PC-3 (cell line): ENCODE measurements at regions of chr2 and their contacts with region 1.

Region 1: GRCh38 chr2:116952254-116952653 is 862.2 kb upstream of the DDX18 start:
- DNase-seq: peak; percentile 52
- ATAC-seq: no peak
- H3K4me3 ChIP-seq: no peak overlapping the region
- H3K27ac ChIP-seq: no peak overlapping the region
- H3K4me1 ChIP-seq: no peaks in the 10 kb centered on the region
- H3K27me3 ChIP-seq: no peaks in the 10 kb centered on the region
- CTCF ChIP-seq: peak; percentile 81

Region 2: GRCh38 chr2:116378786-116379185 is 573.5 kb before region 1 on chr2:
- CTCF ChIA-PET with region 1: no interaction called
- POLR2A ChIA-PET with region 1: no interaction called
- intact Hi-C with region 1: no loop called
- DNase-seq: no peak
- ATAC-seq: no peak
- H3K4me3 ChIP-seq: no peak overlapping the region
- H3K27ac ChIP-seq: no peak overlapping the region
- H3K4me1 ChIP-seq: no peaks in the 10 kb centered on the region
- H3K27me3 ChIP-seq: 0 out of 2 replicates have a peak, but pooled peaks cover 2% of the 10 kb centered on the region
- CTCF ChIP-seq: no peak

Region 3: GRCh38 chr2:116747103-116747502 is 205.2 kb before region 1 on chr2:
- CTCF ChIA-PET with region 1: no interaction called
- POLR2A ChIA-PET with region 1: no interaction called
- intact Hi-C with region 1: loop called (anchors 1 kb)
- DNase-seq: peak; percentile 43
- ATAC-seq: no peak
- H3K4me3 ChIP-seq: no peak overlapping the region
- H3K27ac ChIP-seq: no peak overlapping the region
- H3K4me1 ChIP-seq: no peaks in the 10 kb centered on the region
- H3K27me3 ChIP-seq: 0 out of 2 replicates have a peak, but pooled peaks cover 3% of the 10 kb centered on the region
- CTCF ChIP-seq: peak; percentile 72

Region 4: DNA sequence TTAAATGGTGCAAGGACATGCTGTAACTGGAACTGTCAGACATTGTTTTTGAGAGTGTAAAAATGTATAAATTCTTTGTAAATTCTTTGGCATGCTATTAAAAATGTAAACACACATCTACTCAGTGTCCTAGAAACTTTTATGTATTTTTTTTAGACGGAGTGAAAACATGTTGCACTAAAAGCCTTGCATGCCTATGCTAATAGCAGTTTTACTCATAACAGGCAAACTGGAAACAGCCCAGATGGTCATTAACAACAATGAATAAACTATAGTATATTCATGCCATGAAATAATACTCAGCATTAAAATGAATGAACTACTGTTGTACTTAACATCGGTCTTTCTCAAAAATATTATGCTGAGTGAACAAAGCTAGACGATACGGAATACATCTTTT is 92.5 kb before region 1 on chr2:
- CTCF ChIA-PET with region 1: no interaction called
- POLR2A ChIA-PET with region 1: no interaction called
- intact Hi-C with region 1: no loop called
- DNase-seq: no peak
- ATAC-seq: no peak
- H3K4me3 ChIP-seq: no peak overlapping the region
- H3K27ac ChIP-seq: no peak overlapping the region
- H3K4me1 ChIP-seq: no peaks in the 10 kb centered on the region
- H3K27me3 ChIP-seq: no peaks in the 10 kb centered on the region
- CTCF ChIP-seq: no peak

Region 5: DNA sequence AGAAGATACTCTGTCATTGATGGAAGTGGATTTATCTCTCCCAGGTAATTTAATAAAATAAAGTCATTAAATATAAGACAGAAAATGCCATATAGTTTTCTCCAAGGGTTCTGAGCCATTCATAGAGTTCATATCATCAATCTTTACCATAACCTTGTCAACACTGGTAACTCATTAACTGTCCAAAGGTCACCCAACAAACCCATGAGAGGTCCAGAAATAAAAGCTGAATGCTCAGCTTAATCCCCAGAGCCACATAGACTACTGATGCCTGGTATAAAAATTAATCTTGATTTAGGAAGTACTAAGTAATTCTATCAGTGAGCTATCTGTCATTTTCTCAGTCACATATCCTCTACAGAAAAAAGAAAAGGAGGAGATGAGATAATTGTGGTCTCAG is 40.7 kb before region 1 on chr2:
- CTCF ChIA-PET with region 1: no interaction called
- POLR2A ChIA-PET with region 1: no interaction called
- intact Hi-C with region 1: no loop called
- DNase-seq: no peak
- ATAC-seq: no peak
- H3K4me3 ChIP-seq: no peak overlapping the region
- H3K27ac ChIP-seq: no peak overlapping the region
- H3K4me1 ChIP-seq: no peaks in the 10 kb centered on the region
- H3K27me3 ChIP-seq: no peaks in the 10 kb centered on the region
- CTCF ChIP-seq: no peak

Region 6: DNA sequence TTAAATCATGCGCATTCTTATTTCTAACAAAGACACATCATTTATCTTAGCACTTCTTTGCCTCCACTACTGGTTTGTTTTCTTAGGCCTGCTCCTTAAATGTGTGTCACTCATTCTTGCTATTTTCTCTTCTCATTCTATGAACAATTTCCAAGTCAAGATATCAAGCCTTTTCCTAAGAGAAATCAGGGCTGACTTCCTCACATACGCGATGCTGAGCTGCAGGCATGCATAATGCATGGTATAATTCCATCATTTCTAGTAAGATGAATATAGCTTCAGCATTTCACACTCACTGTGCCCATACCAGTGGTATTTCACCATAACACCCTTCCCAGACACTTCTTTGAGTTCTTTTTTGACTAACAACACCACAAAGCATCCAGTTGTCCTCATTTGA is 23.4 kb after region 1 on chr2:
- CTCF ChIA-PET with region 1: no interaction called
- POLR2A ChIA-PET with region 1: no interaction called
- intact Hi-C with region 1: no loop called
- DNase-seq: no peak
- ATAC-seq: no peak
- H3K4me3 ChIP-seq: no peak overlapping the region
- H3K27ac ChIP-seq: no peak overlapping the region
- H3K4me1 ChIP-seq: no peaks in the 10 kb centered on the region
- H3K27me3 ChIP-seq: no peaks in the 10 kb centered on the region
- CTCF ChIP-seq: no peak